ENCODE measurements at regions of chr12 and their contacts with region 1.

Region 1: DNA sequence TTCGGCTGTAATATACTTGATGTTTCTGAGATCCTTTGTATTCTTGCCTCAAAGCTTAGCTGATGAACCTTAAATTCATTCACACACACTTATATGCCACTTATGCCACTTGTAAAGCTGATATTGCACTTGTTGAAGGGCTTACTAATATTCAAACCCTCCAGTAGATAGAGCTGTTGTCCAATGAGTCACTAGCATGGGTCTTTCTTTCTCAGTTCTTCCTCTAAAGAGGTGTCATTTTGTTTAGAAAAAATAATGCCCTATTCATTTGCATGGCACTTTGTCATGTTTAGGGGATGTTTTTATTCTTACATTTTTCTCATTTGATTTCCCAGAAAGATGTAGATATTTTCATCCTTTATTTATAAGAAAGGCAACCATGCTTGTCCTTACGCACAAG is 56.4 kb downstream of the MON2 start:
- DNase-seq: no peak
- H3K4me3 ChIP-seq: no peak overlapping the region
- H3K4me3 Mint-ChIP-seq: no peak overlapping the region
- H3K27ac ChIP-seq: no peak overlapping the region
- H3K27ac Mint-ChIP-seq: peak overlapping the region in 3 of 7 donors; percentile 3 to 67 (median 42)
- H3K4me1 ChIP-seq: peaks cover 25% of the 10 kb centered on the region
- H3K4me1 Mint-ChIP-seq: peaks cover 18 to 37% (median 25%) of the 10 kb centered on the region in 4 donors
- H3K27me3 ChIP-seq: no peaks in the 10 kb centered on the region
- H3K27me3 Mint-ChIP-seq: no peaks in the 10 kb centered on the region

Region 2: GRCh38 chr12:62533755-62534107 is 10.7 kb after region 1 on chr12:
- CTCF ChIA-PET with region 1: no interaction called
- POLR2A ChIA-PET with region 1: no interaction called
- intact Hi-C with region 1: no loop called
- DNase-seq: no peak
- H3K4me3 ChIP-seq: no peak overlapping the region
- H3K4me3 Mint-ChIP-seq: no peak overlapping the region
- H3K27ac ChIP-seq: no peak overlapping the region
- H3K27ac Mint-ChIP-seq: no peak overlapping the region
- H3K4me1 ChIP-seq: no peaks in the 10 kb centered on the region
- H3K4me1 Mint-ChIP-seq: peaks cover 0 to 4% (median 0%) of the 10 kb centered on the region in 4 donors
- H3K27me3 ChIP-seq: no peaks in the 10 kb centered on the region
- H3K27me3 Mint-ChIP-seq: no peaks in the 10 kb centered on the region

Region 3: DNA sequence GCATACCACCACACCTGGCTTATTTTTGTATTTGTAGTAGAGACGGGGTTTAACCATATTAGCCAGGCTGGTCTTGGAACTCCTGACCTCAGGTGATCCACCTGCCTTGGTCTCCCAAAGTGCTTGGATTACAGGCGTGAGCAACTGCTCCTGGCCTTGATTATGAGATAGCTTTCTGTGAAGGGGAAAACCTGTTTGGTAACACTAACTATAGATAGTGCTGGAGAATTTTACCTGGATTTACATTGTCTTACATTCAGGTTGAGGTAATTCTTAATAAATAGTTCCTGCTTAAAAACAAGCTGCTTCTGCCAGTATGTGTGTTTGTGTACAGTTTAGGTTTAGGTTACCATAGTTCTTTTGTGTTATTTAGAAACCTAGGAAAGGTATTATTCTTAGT is 20.8 kb after region 1 on chr12:
- CTCF ChIA-PET with region 1: no interaction called
- POLR2A ChIA-PET with region 1: interaction called, 4 read pairs
- intact Hi-C with region 1: loop called (anchors 2 kb)
- DNase-seq: no peak
- H3K4me3 ChIP-seq: no peak overlapping the region
- H3K4me3 Mint-ChIP-seq: no peak overlapping the region
- H3K27ac ChIP-seq: no peak overlapping the region
- H3K27ac Mint-ChIP-seq: peak overlapping the region in 3 of 7 donors; percentile 19 to 57 (median 46)
- H3K4me1 ChIP-seq: no peaks in the 10 kb centered on the region
- H3K4me1 Mint-ChIP-seq: peaks cover 0 to 6% (median 0%) of the 10 kb centered on the region in 4 donors
- H3K27me3 ChIP-seq: no peaks in the 10 kb centered on the region
- H3K27me3 Mint-ChIP-seq: no peaks in the 10 kb centered on the region

Region 4: GRCh38 chr12:62683776-62684569 is 161.0 kb after region 1 on chr12:
- CTCF ChIA-PET with region 1: no interaction called
- POLR2A ChIA-PET with region 1: no interaction called
- intact Hi-C with region 1: no loop called
- DNase-seq: no peak
- H3K4me3 ChIP-seq: no peak overlapping the region
- H3K4me3 Mint-ChIP-seq: no peak overlapping the region
- H3K27ac ChIP-seq: no peak overlapping the region
- H3K27ac Mint-ChIP-seq: no peak overlapping the region
- H3K4me1 ChIP-seq: no peaks in the 10 kb centered on the region
- H3K4me1 Mint-ChIP-seq: peaks cover 0 to 1% (median 0%) of the 10 kb centered on the region in 4 donors
- H3K27me3 ChIP-seq: no peaks in the 10 kb centered on the region
- H3K27me3 Mint-ChIP-seq: peaks cover 4 to 11% of the 10 kb centered on the region in 2 donors

Region 5: GRCh38 chr12:62732861-62733427 is 210.0 kb after region 1 on chr12:
- CTCF ChIA-PET with region 1: no interaction called
- POLR2A ChIA-PET with region 1: no interaction called
- intact Hi-C with region 1: no loop called
- DNase-seq: no peak
- H3K4me3 ChIP-seq: no peak overlapping the region
- H3K4me3 Mint-ChIP-seq: no peak overlapping the region
- H3K27ac ChIP-seq: no peak overlapping the region
- H3K27ac Mint-ChIP-seq: no peak overlapping the region
- H3K4me1 ChIP-seq: no peaks in the 10 kb centered on the region
- H3K4me1 Mint-ChIP-seq: no peaks in the 10 kb centered on the region
- H3K27me3 ChIP-seq: no peaks in the 10 kb centered on the region
- H3K27me3 Mint-ChIP-seq: peaks cover 0 to 6% of the 10 kb centered on the region in 2 donors